ENCODE measurements at regions of chr7 and their contacts with region 1.

Region 1: GRCh38 chr7:100586266-100587025 is at the start of gene FBXO24:
- DNase-seq: peak; percentile 99 to 100 (median 99)
- H3K4me3 ChIP-seq: peak within 1 kb of the TSS; percentile 87
- H3K4me3 Mint-ChIP-seq: peak within 1 kb of the TSS; percentile 91 to 99 (median 98)
- H3K27ac ChIP-seq: peak within 1 kb of the TSS; percentile 92
- H3K27ac Mint-ChIP-seq: peak within 1 kb of the TSS; percentile 85 to 99 (median 95)
- H3K4me1 ChIP-seq: peaks cover 40% of the 10 kb centered on the region
- H3K4me1 Mint-ChIP-seq: peaks cover 30 to 53% (median 31%) of the 10 kb centered on the region in 3 donors
- H3K27me3 ChIP-seq: no peaks in the 10 kb centered on the region
- H3K27me3 Mint-ChIP-seq: peaks cover 6 to 8% of the 10 kb centered on the region in 2 donors
- total RNA-seq, gene FBXO24: 0.47 to 0.50 TPM

Region 2: DNA sequence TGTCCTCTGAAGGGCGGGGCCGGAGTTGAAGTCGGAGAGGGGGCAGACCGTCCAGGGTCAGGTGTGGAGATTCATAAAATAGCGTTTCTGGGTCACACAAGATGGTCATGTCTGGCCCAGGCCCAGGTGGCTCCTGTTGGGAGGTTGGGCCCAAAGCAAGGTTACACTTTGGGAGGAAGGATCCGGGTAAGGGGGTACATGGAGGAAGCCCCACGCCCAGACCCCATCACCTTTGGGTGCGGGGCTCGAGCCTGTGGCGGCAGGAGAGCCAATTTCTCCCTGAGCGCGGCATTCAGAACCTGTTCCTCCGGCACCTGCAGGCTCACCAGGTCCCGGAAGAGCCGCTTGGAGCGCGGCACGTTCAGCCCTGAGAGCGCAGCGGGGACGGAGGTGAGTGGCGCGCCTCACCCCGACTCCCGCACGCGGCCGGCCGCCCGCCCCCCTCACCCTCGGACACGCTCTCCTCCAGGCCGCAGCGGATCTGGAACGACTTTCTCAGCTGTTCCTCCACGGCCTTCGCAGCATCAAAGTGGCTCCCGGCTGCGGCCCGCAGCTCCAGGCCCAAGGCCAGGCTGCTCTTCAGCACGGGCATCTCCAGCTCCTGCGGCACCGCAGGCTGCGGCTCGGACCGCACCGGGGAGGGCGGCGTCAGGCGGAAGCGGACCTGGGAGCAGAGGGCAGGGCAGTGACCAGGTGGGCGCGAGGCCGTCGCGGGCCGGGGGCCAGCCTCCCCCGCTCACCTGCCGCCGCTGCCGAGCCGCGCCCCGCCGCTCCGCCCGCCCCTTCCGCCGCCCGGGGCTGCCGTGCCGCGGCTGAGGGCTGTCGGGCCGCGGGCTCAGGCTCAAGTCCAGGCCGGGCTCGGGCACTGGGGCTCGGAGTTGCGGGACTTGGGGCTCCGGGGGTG is 150.8 kb before region 1 on chr7:
- CTCF ChIA-PET with region 1: interaction called, 3 read pairs
- POLR2A ChIA-PET with region 1: interaction called, 27 read pairs
- DNase-seq: peak; percentile 33 to 68 (median 46)
- H3K4me3 ChIP-seq: peak overlapping the region; percentile 65
- H3K4me3 Mint-ChIP-seq: peak overlapping the region; percentile 89 to 99 (median 95)
- H3K27ac ChIP-seq: peak overlapping the region; percentile 89
- H3K27ac Mint-ChIP-seq: peak overlapping the region; percentile 85 to 98 (median 96)
- H3K4me1 ChIP-seq: peaks cover 37% of the 10 kb centered on the region
- H3K4me1 Mint-ChIP-seq: peaks cover 36 to 54% (median 38%) of the 10 kb centered on the region in 3 donors
- H3K27me3 ChIP-seq: no peaks in the 10 kb centered on the region
- H3K27me3 Mint-ChIP-seq: no peaks in the 10 kb centered on the region

Region 3: DNA sequence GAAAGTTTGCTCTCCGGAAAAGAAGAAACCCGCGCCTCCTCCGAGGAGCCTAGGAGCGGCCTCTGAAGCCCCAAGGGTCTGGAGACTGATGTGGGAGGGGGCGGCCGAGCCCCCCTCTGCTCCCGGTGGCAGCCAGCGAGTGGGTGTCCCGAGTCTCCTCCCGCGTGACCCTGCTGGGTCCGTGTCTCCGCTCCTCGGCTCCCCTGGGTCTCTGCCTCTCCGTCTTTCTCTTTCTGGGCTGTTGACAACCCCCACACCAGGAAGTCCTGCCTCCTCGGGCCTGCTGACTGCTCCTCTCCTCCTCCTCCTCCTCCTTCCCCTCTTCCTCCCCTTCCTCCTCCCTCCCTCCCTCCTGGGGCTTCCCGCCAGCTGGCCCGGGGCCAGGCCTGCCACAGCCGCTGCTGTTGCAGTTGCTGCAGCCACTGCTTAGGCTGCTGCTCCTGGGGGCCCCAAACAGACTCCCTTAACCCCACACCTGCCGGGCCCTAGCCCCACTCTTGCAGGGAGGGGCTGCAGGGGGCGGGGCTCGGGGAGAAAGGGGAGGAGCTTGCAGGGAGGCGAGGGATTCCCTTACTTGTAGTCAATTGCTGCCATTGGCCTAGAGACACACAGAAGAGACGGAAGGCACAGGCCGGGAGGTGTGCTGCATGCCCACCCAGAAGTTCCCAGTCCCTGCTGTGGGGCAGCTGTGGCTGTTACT is 107.3 kb before region 1 on chr7 and contains the start of gene TSC22D4:
- CTCF ChIA-PET with region 1: interaction called, 8 read pairs
- POLR2A ChIA-PET with region 1: interaction called, 14 read pairs
- DNase-seq: peak; percentile 88 to 97 (median 93)
- H3K4me3 ChIP-seq: peak within 1 kb of the TSS; percentile 66
- H3K4me3 Mint-ChIP-seq: peak within 1 kb of the TSS; percentile 93 to 100 (median 99)
- H3K27ac ChIP-seq: peak within 1 kb of the TSS; percentile 90
- H3K27ac Mint-ChIP-seq: peak within 1 kb of the TSS; percentile 87 to 100 (median 94)
- H3K4me1 ChIP-seq: peaks cover 50% of the 10 kb centered on the region
- H3K4me1 Mint-ChIP-seq: peaks cover 31 to 50% (median 47%) of the 10 kb centered on the region in 3 donors
- H3K27me3 ChIP-seq: no peaks in the 10 kb centered on the region
- H3K27me3 Mint-ChIP-seq: peaks cover 0 to 6% of the 10 kb centered on the region in 2 donors
- total RNA-seq, gene TSC22D4: 96.2 to 99.1 TPM

Region 4: GRCh38 chr7:100568896-100569844 is 17.3 kb before region 1 on chr7:
- CTCF ChIA-PET with region 1: interaction called, 133 read pairs
- POLR2A ChIA-PET with region 1: interaction called, 42 read pairs
- DNase-seq: peak; percentile 39 to 71 (median 47)
- H3K4me3 ChIP-seq: peak overlapping the region; percentile 50
- H3K4me3 Mint-ChIP-seq: peak overlapping the region; percentile 7 to 91 (median 63)
- H3K27ac ChIP-seq: no peak overlapping the region
- H3K27ac Mint-ChIP-seq: peak overlapping the region; percentile 64 to 99 (median 88)
- H3K4me1 ChIP-seq: peaks cover 46% of the 10 kb centered on the region
- H3K4me1 Mint-ChIP-seq: peaks cover 27 to 50% (median 30%) of the 10 kb centered on the region in 3 donors
- H3K27me3 ChIP-seq: no peaks in the 10 kb centered on the region
- H3K27me3 Mint-ChIP-seq: peaks cover 0 to 1% of the 10 kb centered on the region in 2 donors

Region 5: DNA sequence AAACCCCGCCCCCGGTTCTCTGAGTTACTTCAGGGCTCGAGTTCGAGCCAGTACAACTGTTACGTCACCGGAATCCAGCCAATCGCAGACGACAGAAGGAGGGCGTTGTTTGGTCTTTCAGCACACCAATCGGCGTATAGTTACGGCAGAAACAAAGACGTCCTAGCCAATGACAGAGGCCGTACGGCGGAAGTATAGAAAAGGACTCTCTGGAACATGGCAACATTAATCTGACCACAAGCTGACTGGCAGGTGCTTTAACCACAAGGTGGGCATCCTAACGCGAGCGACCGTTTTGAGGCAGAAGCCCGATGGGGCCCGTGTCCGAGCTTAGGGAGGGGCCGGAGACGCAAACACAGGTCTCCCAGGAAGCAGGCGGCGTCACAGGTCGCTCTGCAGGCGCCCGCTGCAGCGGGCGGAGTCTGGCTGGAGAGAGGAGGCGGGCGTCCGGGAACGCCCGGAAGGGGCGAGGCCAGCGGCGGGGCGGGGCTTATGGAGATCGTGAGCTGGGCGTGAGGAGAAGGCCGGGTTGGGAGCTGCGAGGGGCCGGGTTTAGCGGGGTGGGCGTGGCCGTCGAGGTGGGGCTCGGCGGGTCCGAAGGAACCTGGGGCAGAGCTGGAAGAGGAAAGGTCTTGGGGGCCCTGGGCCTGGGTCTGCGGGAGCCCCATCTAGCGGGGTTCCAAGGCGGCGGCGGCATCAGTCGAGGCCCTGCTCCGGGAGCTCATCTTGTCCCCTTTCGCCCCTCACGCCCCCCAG is 25.7 kb after region 1 on chr7 and contains the start of gene MOSPD3:
- CTCF ChIA-PET with region 1: interaction called, 20 read pairs
- POLR2A ChIA-PET with region 1: interaction called, 31 read pairs
- DNase-seq: peak; percentile 96 to 98 (median 98)
- H3K4me3 ChIP-seq: peak within 1 kb of the TSS; percentile 99
- H3K4me3 Mint-ChIP-seq: peak within 1 kb of the TSS; percentile 91 to 100 (median 99)
- H3K27ac ChIP-seq: peak within 1 kb of the TSS; percentile 99
- H3K27ac Mint-ChIP-seq: peak within 1 kb of the TSS; percentile 94 to 100 (median 100)
- H3K4me1 ChIP-seq: peaks cover 19% of the 10 kb centered on the region
- H3K4me1 Mint-ChIP-seq: peaks cover 20 to 24% (median 23%) of the 10 kb centered on the region in 3 donors
- H3K27me3 ChIP-seq: no peaks in the 10 kb centered on the region
- H3K27me3 Mint-ChIP-seq: no peaks in the 10 kb centered on the region
- total RNA-seq, gene MOSPD3: 16.2 to 16.3 TPM

Region 6: GRCh38 chr7:100691676-100692577 is 105.5 kb after region 1 on chr7:
- CTCF ChIA-PET with region 1: interaction called, 44 read pairs
- POLR2A ChIA-PET with region 1: interaction called, 7 read pairs
- DNase-seq: peak; percentile 69 to 85 (median 71)
- H3K4me3 ChIP-seq: peak overlapping the region; percentile 81
- H3K4me3 Mint-ChIP-seq: peak overlapping the region; percentile 88 to 97 (median 94)
- H3K27ac ChIP-seq: no peak overlapping the region
- H3K27ac Mint-ChIP-seq: peak overlapping the region; percentile 15 to 95 (median 86)
- H3K4me1 ChIP-seq: peaks cover 26% of the 10 kb centered on the region
- H3K4me1 Mint-ChIP-seq: peaks cover 36 to 49% (median 39%) of the 10 kb centered on the region in 3 donors
- H3K27me3 ChIP-seq: no peaks in the 10 kb centered on the region
- H3K27me3 Mint-ChIP-seq: no peaks in the 10 kb centered on the region